OCI-LY7 (cell line): ENCODE measurements at regions of chr16 and their contacts with region 1.

Region 1: DNA sequence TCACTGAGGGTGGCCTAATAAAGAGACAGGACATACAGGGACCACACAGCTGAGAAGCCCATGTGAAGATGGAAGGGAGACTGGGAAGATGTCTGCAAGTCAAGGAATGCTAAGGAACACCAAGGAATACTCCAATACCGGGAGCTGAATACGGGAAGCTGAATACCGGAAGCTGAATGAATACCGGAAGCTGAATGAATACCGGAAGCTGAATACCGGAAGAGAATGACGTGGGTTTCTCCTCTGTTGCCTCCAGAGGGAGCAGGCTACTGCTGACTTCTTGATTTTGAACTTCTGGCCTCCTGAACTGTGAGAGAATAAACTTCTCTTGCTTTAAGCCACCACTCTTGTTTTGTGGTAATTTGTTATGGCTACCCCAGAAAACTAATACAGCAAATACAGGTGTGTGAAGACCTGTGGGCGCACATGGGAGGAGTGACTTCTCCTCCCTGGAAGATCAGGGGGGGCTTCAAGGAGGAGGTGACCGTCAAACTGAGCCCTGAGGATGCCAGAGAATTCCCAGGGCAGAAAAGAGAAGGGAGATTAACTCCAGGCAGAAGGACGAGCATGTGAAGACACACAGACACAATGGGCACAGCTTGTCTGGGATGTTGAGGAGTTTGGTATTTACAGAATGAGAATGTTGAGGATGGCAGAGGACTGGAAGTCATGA is 259.9 kb downstream of the IRF8 start:
- DNase-seq: peak; percentile 40
- H3K4me3 ChIP-seq: peak overlapping the region; percentile 29
- H3K27ac ChIP-seq: no peak overlapping the region
- H3K4me1 ChIP-seq: no peaks in the 10 kb centered on the region
- CTCF ChIP-seq: peak; percentile 52

Region 2: GRCh38 chr16:87138316-87138715 is 979.5 kb after region 1 on chr16:
- CTCF ChIA-PET with region 1: interaction called, 11 read pairs
- POLR2A ChIA-PET with region 1: no interaction called
- intact Hi-C with region 1: no loop called
- DNase-seq: no peak
- H3K4me3 ChIP-seq: no peak overlapping the region
- H3K27ac ChIP-seq: no peak overlapping the region
- H3K4me1 ChIP-seq: no peaks in the 10 kb centered on the region
- CTCF ChIP-seq: no peak